ENCODE measurements at regions of chr2 and their contacts with region 1.

Region 1: GRCh38 chr2:121596221-121597080 is 52.8 kb downstream of the CLASP1 start:
- DNase-seq: no peak
- H3K4me3 ChIP-seq: peak overlapping the region; percentile 52
- H3K27ac ChIP-seq: peak overlapping the region; percentile 80
- H3K4me1 ChIP-seq: peaks cover 68% of the 10 kb centered on the region
- H3K27me3 ChIP-seq: no peaks in the 10 kb centered on the region
- CTCF ChIP-seq: peak; percentile 66

Region 2: DNA sequence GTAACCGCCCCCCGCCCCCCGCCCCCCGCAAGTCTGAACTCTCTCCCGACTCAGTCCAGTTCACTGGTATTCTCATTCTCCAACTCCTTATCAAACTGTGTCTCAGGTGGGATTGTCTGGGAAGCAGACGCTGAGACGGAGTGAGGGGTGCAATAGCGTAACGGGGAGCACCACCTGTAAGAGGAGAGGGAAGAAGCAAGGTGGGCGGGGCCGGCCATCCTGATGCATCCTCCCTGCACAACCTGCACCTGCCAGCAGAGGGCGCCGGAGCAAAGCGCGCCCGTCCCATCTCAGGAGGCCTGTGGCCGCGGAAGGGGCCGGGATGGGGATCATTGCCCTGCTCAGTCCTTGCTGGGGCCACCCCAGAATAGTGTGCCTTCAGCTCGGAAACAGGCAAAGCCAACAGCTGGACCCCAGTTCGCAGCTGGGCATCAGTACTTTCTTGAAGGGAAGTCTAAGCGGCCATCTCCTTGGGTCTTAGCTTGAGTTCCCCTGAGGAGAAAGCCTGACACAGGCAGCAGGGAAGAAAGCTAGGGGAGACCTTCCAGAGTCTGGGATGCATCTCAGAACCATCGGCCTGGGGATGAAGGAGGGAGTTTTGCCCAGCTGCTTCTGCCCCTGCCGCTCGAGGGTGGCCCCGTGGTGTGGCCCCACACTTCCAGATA is 519.4 kb before region 1 on chr2:
- intact Hi-C with region 1: no loop called
- DNase-seq: peak; percentile 64
- H3K4me3 ChIP-seq: no peak overlapping the region
- H3K27ac ChIP-seq: no peak overlapping the region
- H3K4me1 ChIP-seq: peaks cover 3% of the 10 kb centered on the region
- H3K27me3 ChIP-seq: peaks cover 83% of the 10 kb centered on the region
- CTCF ChIP-seq: peak; percentile 87

Region 3: GRCh38 chr2:121530212-121530705 is 66.2 kb before region 1 on chr2:
- intact Hi-C with region 1: loop called (anchors 10 kb)
- DNase-seq: peak; percentile 81
- H3K4me3 ChIP-seq: peak overlapping the region; percentile 85
- H3K27ac ChIP-seq: peak overlapping the region; percentile 98
- H3K4me1 ChIP-seq: peaks cover 94% of the 10 kb centered on the region
- H3K27me3 ChIP-seq: no peaks in the 10 kb centered on the region
- CTCF ChIP-seq: no peak

Region 4: GRCh38 chr2:121545257-121545656 is 51.2 kb before region 1 on chr2:
- intact Hi-C with region 1: no loop called
- DNase-seq: no peak
- H3K4me3 ChIP-seq: no peak overlapping the region
- H3K27ac ChIP-seq: peak overlapping the region; percentile 58
- H3K4me1 ChIP-seq: peaks cover 80% of the 10 kb centered on the region
- H3K27me3 ChIP-seq: no peaks in the 10 kb centered on the region
- CTCF ChIP-seq: no peak

Region 5: DNA sequence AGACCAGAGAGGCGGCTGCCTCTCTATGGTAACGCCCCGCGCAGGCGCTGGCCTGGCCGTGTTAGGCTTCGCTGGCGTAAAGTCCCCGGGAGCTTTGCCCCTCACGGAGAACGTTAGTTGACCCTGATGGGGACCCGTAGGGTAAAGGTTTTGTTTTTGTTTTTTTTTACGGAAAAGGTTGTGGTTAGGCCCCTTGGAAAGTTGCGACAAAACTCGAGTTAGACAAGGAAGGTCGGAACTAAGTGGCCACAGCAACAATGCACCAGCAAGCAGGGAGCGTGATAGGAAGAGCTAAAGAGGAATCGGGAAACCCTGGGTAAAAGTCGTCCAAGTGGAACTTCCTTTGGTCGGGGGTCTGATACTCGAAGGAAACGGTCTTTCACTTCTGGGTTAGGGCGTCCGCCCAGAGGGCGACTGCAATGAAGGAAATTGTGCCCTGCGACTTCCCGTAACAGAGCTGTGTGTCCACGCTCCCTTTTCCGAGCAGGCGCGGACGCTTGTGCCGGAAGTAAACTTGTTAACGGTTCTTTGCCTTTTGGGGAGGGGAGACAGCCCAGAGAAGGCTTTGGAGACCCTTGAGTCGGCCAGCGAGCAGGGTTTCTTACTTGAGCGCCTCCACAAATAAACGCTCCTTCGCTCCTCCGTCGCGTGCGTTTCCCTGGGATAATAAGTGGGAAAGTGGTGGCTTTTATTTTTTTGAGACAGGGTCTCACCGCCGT is 53.3 kb after region 1 on chr2:
- intact Hi-C with region 1: loop called (anchors 1 kb)
- DNase-seq: peak; percentile 96
- H3K4me3 ChIP-seq: peak overlapping the region; percentile 94
- H3K27ac ChIP-seq: peak overlapping the region; percentile 96
- H3K4me1 ChIP-seq: peaks cover 81% of the 10 kb centered on the region
- H3K27me3 ChIP-seq: no peaks in the 10 kb centered on the region
- CTCF ChIP-seq: no peak

Region 6: GRCh38 chr2:121662651-121663050 is 66.2 kb after region 1 on chr2:
- intact Hi-C with region 1: no loop called
- DNase-seq: no peak
- H3K4me3 ChIP-seq: no peak overlapping the region
- H3K27ac ChIP-seq: no peak overlapping the region
- H3K4me1 ChIP-seq: peaks cover 42% of the 10 kb centered on the region
- H3K27me3 ChIP-seq: no peaks in the 10 kb centered on the region
- CTCF ChIP-seq: no peak